ENCODE measurements at regions of chr1 and their contacts with region 1.

Region 1: DNA sequence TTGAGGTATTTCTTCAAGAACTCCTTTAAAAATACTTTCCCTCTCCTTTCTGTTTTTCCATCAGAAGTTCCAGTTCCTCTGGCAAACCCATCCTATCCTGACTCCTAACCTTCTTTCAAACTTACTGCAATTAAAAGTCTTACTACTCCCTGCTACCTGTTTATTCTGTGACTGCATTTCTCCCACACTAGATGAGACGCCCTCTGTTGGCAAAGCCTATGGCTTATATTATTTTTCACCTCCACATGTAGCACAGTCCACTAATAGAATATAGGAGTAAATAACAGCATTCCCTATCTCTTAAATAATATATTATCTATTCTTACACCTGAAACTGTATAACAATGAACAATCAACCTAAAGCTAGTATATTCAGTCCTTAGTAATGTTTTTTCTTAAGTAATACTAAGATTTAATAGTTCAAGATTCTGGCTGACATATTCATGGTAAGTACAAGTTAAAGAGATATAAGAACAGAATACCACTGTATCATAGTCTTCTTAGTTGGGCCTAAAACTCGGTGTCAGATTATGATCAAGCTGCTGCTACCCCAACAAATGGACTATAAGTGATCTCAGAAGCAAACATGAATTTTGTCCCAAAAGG is 54.8 kb downstream of the RAB3GAP2 start:
- DNase-seq: no peak
- CTCF ChIP-seq: peak; percentile 48

Region 2: DNA sequence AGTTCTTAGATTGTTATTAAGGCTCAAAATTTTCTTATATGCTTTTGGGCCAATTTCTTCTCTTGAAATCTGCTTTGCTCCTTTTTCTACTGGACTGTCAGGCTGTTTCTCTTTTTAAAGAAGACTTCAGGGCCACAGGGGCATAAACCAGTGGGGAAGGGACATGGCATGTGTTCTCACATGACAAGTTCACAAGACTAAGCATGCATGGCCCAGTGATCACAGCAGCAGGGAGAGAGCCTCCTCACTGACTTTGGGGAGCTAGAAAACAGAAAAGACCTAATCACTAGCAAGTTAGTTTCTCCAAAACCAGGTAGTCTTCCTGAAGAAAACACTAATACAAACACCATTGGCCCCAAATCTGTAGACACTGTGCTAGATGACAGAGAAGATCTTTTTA is 10.1 kb before region 1 on chr1:
- CTCF ChIA-PET with region 1: interaction called, 36 read pairs
- POLR2A ChIA-PET with region 1: no interaction called
- DNase-seq: no peak
- CTCF ChIP-seq: no peak

Region 3: DNA sequence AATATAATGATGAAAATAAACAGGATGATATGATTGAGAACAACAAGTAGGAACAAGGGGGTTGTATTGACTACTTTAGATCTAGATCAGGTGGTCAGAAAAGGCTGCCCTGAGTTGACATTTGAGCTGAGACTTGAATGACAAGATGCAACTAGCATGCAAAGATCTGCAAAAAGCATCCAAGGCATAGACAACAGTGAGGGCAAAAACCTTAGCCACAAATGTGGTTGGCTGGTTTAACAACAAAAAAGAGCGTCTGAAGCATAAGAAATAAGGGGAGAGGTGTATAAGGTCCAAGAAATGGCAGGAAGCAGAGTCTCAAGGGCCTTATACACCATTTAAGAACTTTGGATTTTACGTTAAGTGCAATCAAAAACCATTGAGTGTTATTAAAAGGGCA is 51.5 kb after region 1 on chr1:
- CTCF ChIA-PET with region 1: interaction called, 18 read pairs
- POLR2A ChIA-PET with region 1: interaction called, 6 read pairs
- DNase-seq: no peak
- CTCF ChIP-seq: no peak

Region 4: DNA sequence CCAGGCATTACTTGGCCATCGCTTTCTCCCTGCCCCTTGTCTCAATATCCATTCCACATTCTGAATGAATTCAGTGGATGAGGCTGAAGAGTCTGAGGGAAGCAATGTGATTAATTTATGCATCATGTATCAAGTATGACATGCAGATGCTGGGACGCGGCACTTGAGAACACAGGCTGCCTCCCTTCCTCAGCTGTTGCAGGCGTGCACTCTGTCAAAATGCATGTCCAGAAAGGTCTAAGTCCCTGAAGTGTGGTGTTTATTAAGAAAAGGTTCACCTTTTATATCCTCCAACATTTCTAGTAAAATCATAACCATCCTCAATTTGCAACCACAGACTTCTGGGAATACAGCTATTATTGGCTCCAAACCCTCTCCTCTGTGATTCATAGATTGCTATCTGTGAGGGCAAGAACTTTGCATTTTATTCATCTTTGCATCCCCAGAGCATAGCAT is 77.4 kb after region 1 on chr1:
- CTCF ChIA-PET with region 1: interaction called, 15 read pairs
- POLR2A ChIA-PET with region 1: no interaction called
- DNase-seq: no peak
- CTCF ChIP-seq: no peak

Region 5: GRCh38 chr1:220776720-220777326 is 559.3 kb after region 1 on chr1:
- CTCF ChIA-PET with region 1: interaction called, 14 read pairs
- POLR2A ChIA-PET with region 1: no interaction called
- DNase-seq: peak; percentile 75
- CTCF ChIP-seq: peak; percentile 93

Measured in GM10248 (cell line).